PC-9 (cell line): ENCODE measurements at regions of chr2 and their contacts with region 1.

Region 1: DNA sequence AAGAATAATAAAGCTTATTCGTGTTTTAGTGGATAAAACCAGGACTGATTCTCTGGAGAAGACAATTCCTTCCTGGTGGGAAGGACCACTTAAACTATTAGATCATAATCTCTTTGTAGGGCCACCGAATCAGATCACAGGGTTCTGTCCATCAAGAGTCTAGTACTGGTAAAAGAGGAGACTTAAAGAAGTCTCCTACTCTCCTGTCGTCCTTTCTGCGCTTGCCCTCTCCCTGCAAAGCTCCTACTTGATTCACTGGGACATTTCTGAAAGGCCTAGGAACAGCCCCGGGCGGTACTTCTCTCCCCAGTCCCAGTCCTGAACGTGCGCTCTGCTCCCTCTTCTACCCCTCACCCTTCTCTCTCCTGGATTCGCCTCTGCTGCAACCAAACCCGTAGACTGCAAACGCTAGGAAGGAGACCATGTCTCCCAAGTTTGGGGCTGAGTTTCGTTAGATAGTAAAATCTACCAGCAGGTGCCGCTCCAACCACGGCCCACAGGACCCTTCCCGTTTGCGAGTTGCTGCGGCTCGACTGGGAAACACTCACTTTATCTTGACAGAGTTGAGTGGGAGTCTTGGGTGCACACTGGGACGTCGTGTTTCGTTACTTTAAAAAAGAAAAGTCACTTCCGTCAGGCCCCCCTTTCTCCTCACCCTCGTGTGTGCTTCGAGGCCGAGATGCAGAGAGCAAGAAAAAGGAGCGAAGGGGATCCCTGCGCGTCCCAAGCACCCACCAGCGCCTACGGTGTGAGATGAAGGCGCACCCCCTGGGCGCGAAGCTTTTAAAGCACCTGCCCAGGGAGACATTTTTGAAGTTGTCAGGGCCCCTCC is 923 bp downstream of the FIGLA start:
- DNase-seq: peak in 1 of 2 experiments; percentile 44
- H3K4me3 ChIP-seq: no peak overlapping the region
- H3K27ac ChIP-seq: no peak overlapping the region
- H3K4me1 ChIP-seq: no peaks in the 10 kb centered on the region
- H3K27me3 ChIP-seq: peaks cover 32% of the 10 kb centered on the region
- CTCF ChIP-seq: peak; percentile 58

Region 2: GRCh38 chr2:69667805-69668382 is 1121.6 kb before region 1 on chr2:
- CTCF ChIA-PET with region 1: no interaction called
- POLR2A ChIA-PET with region 1: interaction called, 10 read pairs
- intact Hi-C with region 1: no loop called
- DNase-seq: no peak
- H3K4me3 ChIP-seq: no peak overlapping the region
- H3K27ac ChIP-seq: no peak overlapping the region
- H3K4me1 ChIP-seq: no peaks in the 10 kb centered on the region
- H3K27me3 ChIP-seq: no peaks in the 10 kb centered on the region
- CTCF ChIP-seq: no peak

Region 3: GRCh38 chr2:70233926-70234325 is 555.6 kb before region 1 on chr2:
- CTCF ChIA-PET with region 1: no interaction called
- POLR2A ChIA-PET with region 1: interaction called, 18 read pairs
- intact Hi-C with region 1: no loop called
- DNase-seq: no peak
- H3K4me3 ChIP-seq: no peak overlapping the region
- H3K27ac ChIP-seq: no peak overlapping the region
- H3K4me1 ChIP-seq: no peaks in the 10 kb centered on the region
- H3K27me3 ChIP-seq: no peaks in the 10 kb centered on the region
- CTCF ChIP-seq: no peak

Region 4: GRCh38 chr2:70656421-70657010 is 133.0 kb before region 1 on chr2:
- CTCF ChIA-PET with region 1: no interaction called
- POLR2A ChIA-PET with region 1: no interaction called
- intact Hi-C with region 1: loop called (anchors 1 kb)
- DNase-seq: no peak
- H3K4me3 ChIP-seq: no peak overlapping the region
- H3K27ac ChIP-seq: no peak overlapping the region
- H3K4me1 ChIP-seq: no peaks in the 10 kb centered on the region
- H3K27me3 ChIP-seq: peaks cover 47% of the 10 kb centered on the region
- CTCF ChIP-seq: no peak

Region 5: GRCh38 chr2:70861777-70862625 is 72.5 kb after region 1 on chr2:
- CTCF ChIA-PET with region 1: interaction called, 4 read pairs
- POLR2A ChIA-PET with region 1: no interaction called
- intact Hi-C with region 1: loop called (anchors 5 kb)
- DNase-seq: peak; percentile 59 to 86
- H3K4me3 ChIP-seq: no peak overlapping the region
- H3K27ac ChIP-seq: no peak overlapping the region
- H3K4me1 ChIP-seq: no peaks in the 10 kb centered on the region
- H3K27me3 ChIP-seq: peaks cover 30% of the 10 kb centered on the region
- CTCF ChIP-seq: peak; percentile 93

Region 6: DNA sequence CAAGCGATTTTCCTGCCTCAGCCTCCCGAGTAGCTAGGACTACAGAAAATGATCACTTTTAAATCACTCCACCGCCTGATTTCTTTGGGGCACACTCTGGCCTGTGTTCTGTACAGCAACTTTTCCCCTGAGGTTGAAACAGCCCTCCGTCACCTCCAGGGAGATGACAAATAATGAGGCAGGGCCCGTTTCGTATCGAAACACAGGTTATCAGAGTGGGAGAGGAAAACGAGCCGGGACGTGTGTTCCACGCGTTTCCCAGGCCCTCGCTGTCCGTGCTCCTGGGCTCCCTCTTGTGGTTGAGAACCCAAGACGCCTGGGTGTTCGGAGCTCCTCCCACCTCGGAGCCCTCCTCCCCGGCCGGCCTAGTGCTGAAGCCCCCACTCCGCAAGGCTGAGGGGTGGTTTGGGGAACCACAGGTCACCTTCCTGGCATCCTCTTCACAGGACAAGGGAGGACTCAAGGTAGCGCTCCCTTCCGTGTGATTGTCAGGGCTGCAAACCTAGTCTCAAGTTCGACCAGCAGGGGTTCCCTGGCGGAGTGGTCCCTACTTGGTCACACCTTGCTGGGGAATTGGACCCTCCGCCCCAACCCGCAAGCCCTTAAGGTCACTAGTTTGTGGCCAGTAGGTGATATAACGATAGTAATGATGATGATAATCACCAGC is 158.9 kb after region 1 on chr2:
- CTCF ChIA-PET with region 1: no interaction called
- POLR2A ChIA-PET with region 1: no interaction called
- intact Hi-C with region 1: loop called (anchors 1 kb)
- DNase-seq: peak in 1 of 2 experiments; percentile 70
- H3K4me3 ChIP-seq: peak overlapping the region; percentile 45; the same call in 1 of the 2 replicates
- H3K27ac ChIP-seq: no peak overlapping the region
- H3K4me1 ChIP-seq: peaks cover 7% of the 10 kb centered on the region; the same call in 1 of the 2 replicates
- H3K27me3 ChIP-seq: no peaks in the 10 kb centered on the region
- CTCF ChIP-seq: peak; percentile 86

Region 7: GRCh38 chr2:71148506-71149063 is 359.1 kb after region 1 on chr2:
- CTCF ChIA-PET with region 1: no interaction called
- POLR2A ChIA-PET with region 1: no interaction called
- intact Hi-C with region 1: loop called (anchors 5 kb)
- DNase-seq: no peak
- H3K4me3 ChIP-seq: no peak overlapping the region
- H3K27ac ChIP-seq: no peak overlapping the region
- H3K4me1 ChIP-seq: no peaks in the 10 kb centered on the region
- H3K27me3 ChIP-seq: no peaks in the 10 kb centered on the region
- CTCF ChIP-seq: no peak